Activated naive CD4-positive, alpha-beta T cell treated with anti-CD3 and anti-CD28 coated beads for 36 hours (primary cell): ENCODE measurements at regions of chr17 and their contacts with region 1.

Region 1: DNA sequence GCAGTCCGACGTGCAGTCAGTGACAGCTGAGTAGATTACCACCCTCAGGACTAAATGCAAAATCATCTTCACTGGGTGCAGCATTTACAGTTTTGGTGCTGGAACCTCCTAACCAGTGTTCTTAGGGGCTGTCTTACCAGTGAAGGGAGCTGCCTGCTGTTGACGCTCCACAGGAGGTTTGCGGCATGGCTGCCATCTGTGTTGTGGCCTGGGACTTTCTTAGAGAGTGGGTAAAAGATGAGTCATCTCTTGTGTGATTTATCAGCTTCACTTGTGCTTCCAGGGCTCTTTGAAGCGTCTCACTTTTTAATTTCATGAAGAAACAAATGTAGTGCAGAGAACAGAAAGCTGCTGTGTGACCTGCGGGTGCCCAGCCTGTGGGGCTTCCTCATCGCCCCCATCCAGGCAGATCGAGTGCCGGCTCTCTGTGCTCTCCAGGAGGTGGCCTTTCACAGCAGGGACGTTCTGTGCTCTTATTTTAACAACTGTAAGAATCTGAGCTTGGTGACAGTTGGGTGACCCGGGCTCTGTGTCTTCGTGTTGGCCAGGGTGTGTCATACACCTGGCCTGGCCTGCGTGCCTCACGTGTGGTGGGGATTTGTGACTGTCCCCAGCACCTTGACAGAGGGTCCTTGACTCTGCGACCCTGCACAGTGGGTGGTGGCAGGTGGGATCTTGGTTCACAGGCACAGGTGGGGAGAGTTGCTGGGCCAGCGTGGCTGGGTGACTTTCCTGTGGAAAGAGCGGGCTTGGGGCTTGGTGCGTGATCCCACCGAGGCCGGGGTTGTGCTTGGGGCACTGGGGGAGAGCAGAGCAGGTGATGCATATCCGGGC is 24.3 kb upstream of the ZNF750 start:
- DNase-seq: peak; percentile 95
- H3K4me3 Mint-ChIP-seq: peak overlapping the region; percentile 57
- H3K27ac Mint-ChIP-seq: peak overlapping the region; percentile 93
- H3K4me1 Mint-ChIP-seq: peaks cover 74% of the 10 kb centered on the region
- H3K27me3 Mint-ChIP-seq: no peaks in the 10 kb centered on the region

Region 2: GRCh38 chr17:82876602-82877379 is 12.6 kb after region 1 on chr17:
- CTCF ChIA-PET with region 1: interaction called, 5 read pairs
- intact Hi-C with region 1: loop called (anchors 1 kb)
- DNase-seq: peak; percentile 45
- H3K4me3 Mint-ChIP-seq: no peak overlapping the region
- H3K27ac Mint-ChIP-seq: peak overlapping the region; percentile 62
- H3K4me1 Mint-ChIP-seq: peaks cover 43% of the 10 kb centered on the region
- H3K27me3 Mint-ChIP-seq: no peaks in the 10 kb centered on the region

Region 3: DNA sequence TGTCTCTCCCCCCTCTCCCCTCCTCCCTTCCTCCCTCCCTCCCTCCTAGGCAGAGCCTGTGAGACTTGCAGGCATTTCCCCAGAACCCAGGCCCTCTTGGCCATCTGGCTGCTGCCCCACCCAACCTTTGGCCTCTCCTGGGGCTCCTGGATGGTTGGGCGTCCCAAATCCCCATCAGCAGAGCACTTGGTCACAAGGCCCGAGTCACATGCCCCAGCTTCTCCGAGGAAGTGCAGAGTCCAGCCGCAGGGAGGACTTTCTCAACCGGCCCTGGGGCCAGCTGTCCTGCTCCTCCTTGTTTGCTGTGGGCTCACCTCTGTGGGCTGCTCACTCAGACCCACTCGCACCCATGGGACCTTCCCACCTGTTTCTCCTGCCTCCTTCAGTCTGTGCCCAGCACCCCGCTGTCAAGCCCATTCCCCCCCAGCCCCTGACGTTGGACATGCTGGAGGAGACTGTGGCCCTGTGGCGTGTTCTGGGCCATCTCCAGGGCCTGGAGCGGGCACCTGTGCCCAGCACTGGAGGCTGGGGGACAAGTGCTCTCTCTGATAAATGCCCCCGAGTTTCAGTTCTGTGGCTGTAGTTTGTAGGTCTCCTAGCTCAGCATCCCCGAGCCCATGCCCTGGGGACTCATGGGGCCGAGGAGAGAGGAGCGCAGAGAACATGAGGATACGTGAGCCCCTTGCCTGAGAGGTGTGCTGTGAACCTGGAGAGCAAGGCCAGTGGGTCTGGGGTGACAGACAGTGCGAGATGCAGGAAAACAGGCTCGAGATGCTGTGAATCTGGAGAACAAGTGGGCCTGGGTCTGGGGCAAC is 17.9 kb after region 1 on chr17:
- CTCF ChIA-PET with region 1: interaction called, 6 read pairs
- intact Hi-C with region 1: loop called (anchors 1 kb)
- DNase-seq: no peak
- H3K4me3 Mint-ChIP-seq: peak overlapping the region; percentile 70
- H3K27ac Mint-ChIP-seq: peak overlapping the region; percentile 89
- H3K4me1 Mint-ChIP-seq: peaks cover 75% of the 10 kb centered on the region
- H3K27me3 Mint-ChIP-seq: no peaks in the 10 kb centered on the region

Region 4: DNA sequence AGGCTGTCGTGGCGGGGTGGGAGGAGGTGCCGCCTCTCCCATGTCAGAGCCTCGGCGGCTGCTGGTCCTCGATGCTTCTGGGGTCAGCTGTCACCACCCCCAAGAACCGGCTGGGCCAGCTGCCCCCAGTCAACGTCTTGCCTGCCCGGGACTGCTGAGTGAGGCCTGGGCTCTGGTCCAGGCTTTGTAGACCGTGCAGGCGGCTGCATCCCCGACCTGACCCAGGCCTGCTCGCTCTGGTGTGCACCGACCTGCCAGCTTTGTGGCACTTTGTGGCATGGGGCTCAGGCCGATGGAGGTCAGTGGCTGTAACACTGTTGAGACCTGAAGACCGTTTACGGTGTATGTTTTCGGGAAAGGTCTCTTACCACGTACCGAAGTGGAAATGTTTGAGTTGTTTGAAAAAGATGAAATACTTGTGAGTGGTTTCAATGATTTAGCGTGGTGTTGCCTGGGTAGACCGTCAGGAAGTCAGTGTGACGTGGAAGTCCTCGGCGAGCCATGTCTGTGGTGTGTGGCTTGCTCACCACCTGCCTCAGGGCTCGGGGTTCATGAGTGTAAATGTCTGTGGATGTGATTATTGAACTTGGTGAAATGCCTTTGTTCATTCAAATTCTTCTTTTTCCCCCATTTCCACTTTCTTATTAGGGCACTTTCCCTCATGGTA is 28.9 kb after region 1 on chr17:
- CTCF ChIA-PET with region 1: no interaction called
- intact Hi-C with region 1: loop called (anchors 1 kb)
- DNase-seq: peak; percentile 77
- H3K4me3 Mint-ChIP-seq: peak overlapping the region; percentile 67
- H3K27ac Mint-ChIP-seq: peak overlapping the region; percentile 83
- H3K4me1 Mint-ChIP-seq: peaks cover 39% of the 10 kb centered on the region
- H3K27me3 Mint-ChIP-seq: no peaks in the 10 kb centered on the region